Right lobe of liver (tissue), 6 donors: ENCODE measurements at regions of chr1 and their contacts with region 1.

Region 1: GRCh38 chr1:116485071-116485735 is 85.6 kb downstream of the CD58 start:
- DNase-seq: peak; percentile 86 to 87 (median 87)
- ATAC-seq: peak; percentile 84 to 94 (median 92)
- H3K4me3 ChIP-seq: no peak overlapping the region
- H3K27ac ChIP-seq: no peak overlapping the region
- H3K4me1 ChIP-seq: peaks cover 0 to 7% (median 1%) of the 10 kb centered on the region in 4 donors
- H3K27me3 ChIP-seq: no peaks in the 10 kb centered on the region
- CTCF ChIP-seq: peak; percentile 92 to 96 (median 94)
- POLR2A ChIP-seq: no peak

Region 2: GRCh38 chr1:116147972-116148371 is 337.2 kb before region 1 on chr1:
- intact Hi-C with region 1: loop called (anchors 10 kb)
- DNase-seq: no peak
- ATAC-seq: no peak
- H3K4me3 ChIP-seq: no peak overlapping the region
- H3K27ac ChIP-seq: no peak overlapping the region
- H3K4me1 ChIP-seq: peaks cover 0 to 11% (median 2%) of the 10 kb centered on the region in 4 donors
- H3K27me3 ChIP-seq: no peaks in the 10 kb centered on the region
- CTCF ChIP-seq: no peak
- POLR2A ChIP-seq: no peak

Region 3: DNA sequence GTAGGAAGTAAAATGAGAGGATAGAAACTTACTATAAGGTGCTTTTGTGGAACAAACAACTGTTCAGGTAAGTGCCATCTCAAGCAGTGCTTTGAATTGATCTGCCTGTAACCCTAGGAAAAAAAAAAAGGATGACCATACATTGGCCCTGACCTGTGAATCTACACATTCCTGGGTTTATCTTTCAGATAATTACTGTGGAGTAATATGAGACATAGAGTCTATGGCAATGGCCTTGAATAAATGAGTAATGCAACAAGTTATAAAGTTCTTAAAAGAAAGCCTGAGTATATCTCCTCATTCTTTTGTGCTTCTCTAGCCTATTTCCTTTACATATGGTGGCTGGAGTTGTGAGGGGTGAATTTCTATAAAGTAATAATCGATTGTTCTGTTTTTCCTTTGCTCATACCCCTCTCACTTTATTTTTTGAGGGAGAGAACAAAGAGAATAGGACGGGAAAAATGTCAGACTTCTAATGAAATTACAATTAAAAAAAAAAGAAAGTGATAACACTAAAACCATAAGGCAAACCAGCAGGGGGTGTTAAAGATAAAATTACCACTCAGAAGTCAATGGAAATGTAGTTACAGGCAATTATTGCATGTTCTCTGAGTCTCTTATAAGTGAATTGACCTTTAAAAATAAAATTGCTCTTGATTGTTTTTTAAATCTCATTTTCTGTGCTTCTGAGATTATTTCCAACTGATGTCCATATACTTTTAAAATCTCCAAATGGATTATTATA is 124.6 kb before region 1 on chr1:
- intact Hi-C with region 1: loop called (anchors 5 to 10 kb)
- DNase-seq: no peak
- ATAC-seq: peak; percentile 60 to 75 (median 72)
- H3K4me3 ChIP-seq: no peak overlapping the region
- H3K27ac ChIP-seq: no peak overlapping the region
- H3K4me1 ChIP-seq: peaks cover 0 to 5% (median 0%) of the 10 kb centered on the region in 4 donors
- H3K27me3 ChIP-seq: no peaks in the 10 kb centered on the region
- CTCF ChIP-seq: peak; percentile 39 to 56 (median 50)
- POLR2A ChIP-seq: no peak

Region 4: DNA sequence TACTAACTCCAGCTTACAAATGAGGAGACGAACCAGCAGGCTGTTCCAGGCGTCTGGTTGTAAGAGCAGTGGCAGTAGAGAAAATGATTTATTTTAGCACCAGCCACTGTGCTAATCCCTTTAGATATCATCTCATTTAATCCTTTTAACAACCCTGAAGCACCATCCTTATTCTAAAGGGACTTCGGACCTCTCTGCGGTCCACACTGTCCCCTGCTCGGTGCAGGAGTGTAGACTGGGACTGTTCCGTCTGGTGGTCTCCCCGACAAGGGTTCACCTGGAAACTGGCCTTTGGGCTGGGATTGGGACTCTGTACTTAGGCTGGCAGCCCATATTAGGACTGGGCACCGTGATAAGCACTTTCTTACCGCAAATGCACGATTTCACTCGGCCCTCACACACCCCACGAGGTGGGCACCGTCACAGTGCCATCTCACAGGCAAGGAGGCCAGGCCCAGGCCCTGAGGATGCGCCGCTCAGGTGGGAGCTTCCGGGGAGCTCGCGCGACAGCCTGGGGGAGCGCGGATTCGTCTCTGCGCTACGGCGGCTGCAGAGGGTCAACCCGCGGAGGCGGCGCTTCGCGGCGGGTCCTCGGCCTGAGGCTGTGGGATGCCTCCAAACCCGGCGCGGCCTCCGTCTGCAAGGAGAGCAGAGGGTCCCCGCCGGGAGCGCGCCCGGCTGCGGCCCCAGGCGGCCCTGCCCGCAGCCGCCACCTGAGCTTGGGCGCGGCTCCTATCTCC is 66.9 kb before region 1 on chr1:
- intact Hi-C with region 1: no loop called
- DNase-seq: peak; percentile 85 to 87 (median 86)
- ATAC-seq: peak; percentile 92 to 99 (median 94)
- H3K4me3 ChIP-seq: peak overlapping the region; percentile 72 to 95 (median 82)
- H3K27ac ChIP-seq: peak overlapping the region; percentile 40 to 58 (median 54)
- H3K4me1 ChIP-seq: peaks cover 0 to 12% (median 5%) of the 10 kb centered on the region in 4 donors
- H3K27me3 ChIP-seq: no peaks in the 10 kb centered on the region
- CTCF ChIP-seq: no peak
- POLR2A ChIP-seq: peak; percentile 64